ENCODE measurements at regions of chrX and their contacts with region 1.

Region 1: DNA sequence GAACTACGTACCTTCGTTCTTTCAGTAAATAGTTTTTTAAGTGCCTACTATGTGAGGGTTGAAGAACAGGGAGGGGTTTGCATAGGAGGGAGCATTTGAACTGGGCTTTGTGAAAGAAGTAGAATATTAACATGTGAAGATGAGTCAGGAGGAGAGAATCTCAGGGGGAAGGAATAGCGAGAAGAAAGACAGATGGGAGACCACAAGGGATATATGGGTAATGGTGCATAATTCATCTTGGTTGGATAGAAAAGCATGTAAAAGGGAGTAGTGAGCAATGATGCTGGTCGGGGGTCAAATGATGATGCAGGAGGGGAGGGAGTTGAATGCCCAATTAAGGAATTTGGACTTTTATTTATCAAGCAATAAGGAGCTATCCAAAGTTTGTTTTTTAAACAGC is 52.7 kb downstream of the TMEM164 start:
- DNase-seq: no peak
- H3K4me3 Mint-ChIP-seq: no peak overlapping the region
- H3K27ac Mint-ChIP-seq: no peak overlapping the region
- H3K4me1 Mint-ChIP-seq: peaks cover 5% of the 10 kb centered on the region
- H3K27me3 Mint-ChIP-seq: no peaks in the 10 kb centered on the region

Region 2: GRCh38 chrX:110086916-110087484 is 31.4 kb after region 1 on chrX:
- intact Hi-C with region 1: loop called (anchors 1 kb)
- DNase-seq: no peak
- H3K4me3 Mint-ChIP-seq: no peak overlapping the region
- H3K27ac Mint-ChIP-seq: no peak overlapping the region
- H3K4me1 Mint-ChIP-seq: peaks cover 15% of the 10 kb centered on the region
- H3K27me3 Mint-ChIP-seq: no peaks in the 10 kb centered on the region

Region 3: GRCh38 chrX:110519906-110520452 is 464.4 kb after region 1 on chrX:
- intact Hi-C with region 1: no loop called
- DNase-seq: no peak
- H3K4me3 Mint-ChIP-seq: no peak overlapping the region
- H3K27ac Mint-ChIP-seq: no peak overlapping the region
- H3K4me1 Mint-ChIP-seq: no peaks in the 10 kb centered on the region
- H3K27me3 Mint-ChIP-seq: no peaks in the 10 kb centered on the region

Region 4: DNA sequence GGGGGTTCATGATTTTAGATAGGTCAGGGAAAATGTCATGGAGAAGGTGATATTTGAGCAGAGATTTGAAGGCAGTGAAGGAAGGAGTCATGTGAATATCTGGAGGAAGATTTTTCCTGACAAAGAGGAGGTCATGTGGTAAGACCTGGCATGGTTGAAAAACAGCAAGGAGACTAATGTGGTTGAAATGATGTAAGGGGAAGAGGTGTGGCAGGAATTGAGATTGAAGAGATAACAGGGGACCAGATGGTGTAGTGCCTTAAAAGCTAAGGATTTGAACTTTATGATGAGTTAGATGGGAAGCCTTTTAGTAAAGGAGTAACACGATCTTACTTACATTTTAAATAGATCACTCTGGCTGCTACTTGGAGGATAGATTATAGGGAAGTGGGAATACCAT is 513.9 kb after region 1 on chrX:
- intact Hi-C with region 1: no loop called
- DNase-seq: no peak
- H3K4me3 Mint-ChIP-seq: no peak overlapping the region
- H3K27ac Mint-ChIP-seq: no peak overlapping the region
- H3K4me1 Mint-ChIP-seq: peaks cover 3% of the 10 kb centered on the region
- H3K27me3 Mint-ChIP-seq: no peaks in the 10 kb centered on the region

Measured in activated CD4-positive, alpha-beta T cell treated with anti-CD3 and anti-CD28 coated beads, Interleukin-2, amount 10 ng/mL, durations not matched to agents 24 days and 14 days (primary cell).